GM10248 (cell line): ENCODE measurements at regions of chr2 and their contacts with region 1.

Region 1: DNA sequence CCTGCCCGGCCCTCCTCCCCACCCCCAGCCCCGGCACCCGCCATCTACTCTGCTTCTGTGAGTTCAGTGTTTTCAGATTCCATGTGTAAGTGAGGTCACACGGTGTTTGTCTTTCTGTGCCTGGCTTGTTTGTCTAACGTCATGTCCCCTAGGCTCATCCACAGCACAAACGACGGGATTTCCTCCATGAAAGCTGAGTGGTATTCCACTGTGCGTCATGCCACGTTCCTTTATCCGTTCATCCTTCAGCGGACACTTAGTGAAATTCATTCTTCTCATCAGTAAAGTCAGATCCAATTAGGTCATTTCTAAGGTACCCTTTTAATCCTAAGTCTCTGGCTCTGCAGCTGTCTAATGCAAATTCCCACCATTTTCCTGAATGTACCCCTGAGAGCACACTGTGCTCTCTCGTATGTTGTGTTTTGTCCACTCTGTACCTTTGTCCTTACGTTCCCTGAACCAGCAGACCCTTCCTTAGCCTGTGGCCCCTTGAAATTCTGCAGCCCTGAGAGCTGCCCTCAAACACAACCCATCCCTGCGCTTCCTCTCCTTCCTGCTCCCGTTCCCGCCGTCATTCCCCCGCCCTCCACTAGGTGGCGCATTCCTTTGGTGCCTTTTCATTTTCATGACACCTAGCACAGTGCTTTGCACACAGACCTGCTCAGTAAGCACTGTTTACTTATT is 44.1 kb downstream of the TRAPPC12 start:
- DNase-seq: peak; percentile 69
- CTCF ChIP-seq: peak; percentile 80

Region 2: GRCh38 chr2:3151153-3151918 is 272.3 kb before region 1 on chr2:
- CTCF ChIA-PET with region 1: no interaction called
- POLR2A ChIA-PET with region 1: no interaction called
- DNase-seq: no peak
- CTCF ChIP-seq: no peak

Region 3: GRCh38 chr2:3386448-3386958 is 37.1 kb before region 1 on chr2:
- CTCF ChIA-PET with region 1: interaction called, 14 read pairs
- POLR2A ChIA-PET with region 1: no interaction called
- DNase-seq: no peak
- CTCF ChIP-seq: no peak

Region 4: DNA sequence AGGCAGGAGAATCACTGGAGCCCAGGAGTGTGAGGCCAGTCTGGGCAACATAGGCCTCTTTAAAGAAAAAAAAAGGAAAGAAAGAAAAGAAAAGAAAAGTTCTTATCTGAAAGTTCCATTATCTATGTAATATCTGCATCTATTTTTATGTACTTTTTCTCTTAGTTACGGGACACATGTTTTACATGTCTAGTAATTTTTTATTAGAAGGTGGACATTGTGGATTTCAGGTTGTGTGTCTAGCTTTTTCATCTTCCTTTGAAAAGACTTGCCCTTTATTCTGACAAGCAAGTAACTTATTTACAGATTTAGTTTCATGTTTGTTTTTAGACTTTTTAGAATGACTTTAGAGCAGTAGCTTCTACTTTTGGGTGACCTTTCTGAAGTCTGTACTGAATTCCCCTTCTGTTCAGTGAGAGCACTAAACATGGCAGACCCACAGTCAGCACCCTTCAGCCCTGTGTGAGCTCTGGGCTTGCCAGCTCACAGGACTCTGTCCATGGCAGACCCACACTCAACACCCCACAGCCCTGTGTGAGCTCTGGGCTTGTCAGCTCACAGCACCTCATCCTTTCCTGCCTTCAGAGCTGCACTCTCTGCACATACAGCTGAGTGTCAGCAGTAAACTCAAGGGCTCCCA is 26.6 kb before region 1 on chr2:
- CTCF ChIA-PET with region 1: interaction called, 16 read pairs
- POLR2A ChIA-PET with region 1: no interaction called
- DNase-seq: no peak
- CTCF ChIP-seq: no peak

Region 5: DNA sequence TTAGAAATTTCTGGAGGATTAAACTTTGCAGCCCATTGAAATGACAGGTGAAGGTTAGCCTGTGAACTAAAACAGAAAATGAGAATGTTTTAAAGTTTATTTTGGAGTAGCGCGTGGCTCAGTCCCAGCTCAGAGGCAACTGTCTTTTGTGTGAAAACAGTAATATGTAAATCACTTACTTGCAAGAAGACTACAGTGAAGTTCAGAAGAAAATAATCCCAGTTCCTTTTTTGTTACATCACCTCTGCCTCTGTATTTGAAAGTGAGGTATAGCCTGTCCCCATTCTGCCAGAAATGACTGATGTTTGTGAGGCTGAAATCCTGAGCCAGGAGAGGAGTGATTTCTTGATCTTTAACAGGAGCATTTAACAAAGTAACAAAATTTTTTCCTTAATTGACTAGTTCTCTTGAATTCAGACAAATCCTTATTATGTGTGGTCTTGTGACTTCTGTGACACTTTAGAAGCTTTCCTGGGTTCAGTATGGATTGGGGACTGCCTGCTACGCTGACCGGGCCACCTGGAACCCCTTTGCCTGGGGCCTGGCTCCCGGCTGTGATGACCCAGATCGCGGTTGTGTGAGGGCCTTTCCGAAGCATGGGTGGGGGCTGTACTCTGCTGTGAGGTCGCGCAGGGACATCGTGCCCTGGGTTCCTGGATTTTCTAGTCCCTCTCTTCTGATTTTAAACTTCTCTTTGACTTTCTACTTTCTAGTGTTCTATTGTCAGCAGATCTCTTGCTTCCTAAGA is 19.9 kb before region 1 on chr2:
- CTCF ChIA-PET with region 1: interaction called, 16 read pairs
- POLR2A ChIA-PET with region 1: no interaction called
- DNase-seq: peak; percentile 85
- CTCF ChIP-seq: no peak

Region 6: GRCh38 chr2:3443506-3444073 is 20.0 kb after region 1 on chr2:
- CTCF ChIA-PET with region 1: interaction called, 84 read pairs
- POLR2A ChIA-PET with region 1: no interaction called
- DNase-seq: no peak
- CTCF ChIP-seq: no peak

Region 7: DNA sequence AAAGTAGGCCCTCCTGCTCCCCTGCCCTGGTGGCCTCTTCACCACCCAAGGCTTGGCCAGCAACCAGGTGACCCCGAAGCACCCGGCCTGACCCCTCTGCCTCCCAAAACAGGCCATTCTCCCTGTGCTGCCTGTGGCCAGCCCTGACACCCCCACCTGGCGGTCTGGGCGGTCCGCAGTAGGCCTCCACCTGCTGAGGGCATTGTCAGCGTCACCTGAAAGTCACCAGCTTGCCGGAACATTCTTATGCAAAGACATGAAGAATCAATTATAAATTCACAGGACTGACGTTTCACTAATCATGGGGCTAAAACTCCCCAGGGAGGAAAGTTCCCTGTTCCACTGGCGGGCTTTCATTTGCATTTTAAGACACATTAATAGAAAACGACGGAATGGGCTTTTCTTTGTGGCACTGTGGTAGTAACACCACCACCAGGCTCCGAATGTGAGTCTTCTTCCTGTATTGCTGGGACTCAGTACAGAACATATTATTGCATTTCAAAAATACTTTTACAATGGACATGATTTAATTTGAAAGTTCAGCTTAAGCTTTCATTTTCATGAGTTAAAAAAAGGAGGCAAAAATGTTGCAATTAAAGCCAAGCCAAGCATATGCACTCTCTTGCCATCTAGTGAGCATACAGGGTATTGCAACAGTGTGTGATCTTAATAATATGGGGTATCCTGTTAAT is 38.3 kb after region 1 on chr2:
- CTCF ChIA-PET with region 1: interaction called, 103 read pairs
- POLR2A ChIA-PET with region 1: no interaction called
- DNase-seq: peak; percentile 77
- CTCF ChIP-seq: peak; percentile 82

Region 8: GRCh38 chr2:3523551-3524041 is 100.0 kb after region 1 on chr2:
- CTCF ChIA-PET with region 1: no interaction called
- POLR2A ChIA-PET with region 1: no interaction called
- DNase-seq: no peak
- CTCF ChIP-seq: no peak

Region 9: GRCh38 chr2:3651691-3652648 is 228.3 kb after region 1 on chr2:
- CTCF ChIA-PET with region 1: interaction called, 10 read pairs
- POLR2A ChIA-PET with region 1: no interaction called
- DNase-seq: peak; percentile 88
- CTCF ChIP-seq: no peak